ENCODE measurements at regions of chr7 and their contacts with region 1.

Region 1: DNA sequence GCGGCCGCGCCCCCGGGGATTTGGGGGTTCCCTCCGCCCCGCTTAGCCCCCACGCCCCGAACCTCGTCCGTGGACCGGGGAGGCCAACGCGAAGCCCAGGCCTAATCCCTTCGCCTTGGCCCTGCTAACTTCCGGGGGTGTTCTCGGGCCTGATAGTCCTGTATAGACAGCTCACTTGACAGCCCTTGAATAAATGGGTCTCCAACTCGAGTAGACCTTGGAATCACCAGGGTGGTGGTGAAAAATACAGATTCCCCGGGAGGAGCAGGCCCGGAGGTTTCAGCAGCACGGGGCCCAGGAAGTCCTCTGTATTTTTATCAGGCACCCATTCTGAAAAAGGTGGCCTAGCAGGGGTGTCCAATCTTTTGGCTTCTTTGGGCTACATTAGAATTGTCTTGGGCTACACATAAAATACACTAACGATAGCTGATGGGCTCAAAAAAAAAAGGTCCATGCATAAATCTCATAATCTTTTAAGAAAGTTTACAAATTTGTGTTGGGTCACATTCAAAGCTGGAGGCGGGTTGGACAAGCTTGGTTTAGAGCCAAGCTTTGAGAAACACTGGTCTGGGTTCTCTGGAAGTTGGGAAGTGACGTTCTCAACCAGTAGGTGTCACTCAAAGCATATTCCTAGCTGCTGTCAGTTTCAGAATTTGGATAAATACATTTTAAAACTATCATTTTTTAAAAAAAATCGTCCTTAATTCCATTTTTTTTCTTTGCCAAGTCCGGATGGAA is 221.7 kb downstream of the PHTF2 start:
- DNase-seq: peak; percentile 80
- H3K4me3 ChIP-seq: peak overlapping the region in 2 of 3 experiments; percentile 33 to 41
- H3K27ac ChIP-seq: peak overlapping the region; percentile 28
- H3K4me1 ChIP-seq: peaks cover 11% of the 10 kb centered on the region
- H3K27me3 ChIP-seq: peaks cover 9 to 15% of the 10 kb centered on the region in 2 experiments
- CTCF ChIP-seq: peak; percentile 57 to 65
- POLR2A ChIP-seq: no peak

Region 2: DNA sequence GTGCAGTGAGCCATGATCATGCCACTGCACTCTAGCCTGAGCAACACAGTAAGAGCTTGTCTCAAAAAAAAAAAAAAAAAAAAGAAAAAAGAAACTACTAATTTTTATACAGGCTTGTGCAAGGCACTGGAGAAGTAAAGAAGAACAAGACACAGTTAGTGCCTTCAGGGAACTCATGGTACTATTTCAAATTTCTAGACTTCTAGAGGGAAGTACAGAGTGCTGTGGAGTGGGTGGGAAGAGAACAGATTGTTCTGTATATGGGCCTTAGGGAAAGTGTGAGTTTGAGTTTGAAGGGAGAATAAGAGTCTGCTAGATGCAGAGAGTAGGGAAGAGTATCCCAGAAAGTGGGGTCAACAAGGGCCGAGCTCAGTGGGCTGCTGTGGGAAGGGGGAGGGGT is 13.1 kb after region 1 on chr7:
- CTCF ChIA-PET with region 1: interaction called, 112 read pairs
- POLR2A ChIA-PET with region 1: no interaction called
- dilution Hi-C with region 1: no loop called
- intact Hi-C with region 1: no loop called
- DNase-seq: no peak
- H3K4me3 ChIP-seq: no peak overlapping the region
- H3K27ac ChIP-seq: no peak overlapping the region
- H3K4me1 ChIP-seq: no peaks in the 10 kb centered on the region
- H3K27me3 ChIP-seq: peaks cover 4 to 17% of the 10 kb centered on the region in 2 experiments
- CTCF ChIP-seq: no peak
- POLR2A ChIP-seq: no peak

Region 3: DNA sequence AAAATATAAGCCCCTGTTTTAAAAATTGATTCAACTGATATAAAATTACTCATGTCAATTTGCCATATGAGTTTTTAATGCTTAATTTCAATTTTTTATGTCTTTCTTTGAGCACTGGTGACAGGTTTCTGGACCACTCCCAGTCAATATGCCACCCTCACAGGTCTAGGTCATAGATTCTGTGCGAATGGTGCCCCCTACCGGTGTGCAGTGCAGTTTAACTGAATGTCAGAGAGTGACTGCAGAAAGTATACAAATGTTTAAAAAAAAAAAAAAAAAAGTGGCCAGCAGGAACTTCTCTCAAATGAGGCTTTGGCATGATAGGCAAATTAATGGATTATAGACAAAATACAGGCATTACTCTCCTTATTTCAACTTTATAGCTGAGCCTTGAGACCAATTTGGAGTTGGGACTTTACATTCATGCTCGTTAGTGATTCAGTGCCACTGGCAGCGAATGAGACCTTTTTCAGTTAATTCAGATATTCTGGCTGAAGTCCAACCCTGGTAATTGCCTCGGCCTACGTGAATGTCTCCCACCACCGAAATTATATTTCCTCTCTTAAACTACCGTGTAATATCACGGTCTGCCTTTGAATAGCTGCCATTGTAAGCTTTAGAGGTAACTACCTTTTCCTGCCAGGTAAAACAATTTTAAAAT is 205.9 kb after region 1 on chr7:
- CTCF ChIA-PET with region 1: interaction called, 3 read pairs
- POLR2A ChIA-PET with region 1: no interaction called
- dilution Hi-C with region 1: no loop called
- intact Hi-C with region 1: loop called (anchors 2 kb)
- DNase-seq: peak; percentile 25
- H3K4me3 ChIP-seq: no peak overlapping the region
- H3K27ac ChIP-seq: no peak overlapping the region
- H3K4me1 ChIP-seq: no peaks in the 10 kb centered on the region
- H3K27me3 ChIP-seq: no peaks in the 10 kb centered on the region
- CTCF ChIP-seq: peak; percentile 23
- POLR2A ChIP-seq: no peak

Region 4: DNA sequence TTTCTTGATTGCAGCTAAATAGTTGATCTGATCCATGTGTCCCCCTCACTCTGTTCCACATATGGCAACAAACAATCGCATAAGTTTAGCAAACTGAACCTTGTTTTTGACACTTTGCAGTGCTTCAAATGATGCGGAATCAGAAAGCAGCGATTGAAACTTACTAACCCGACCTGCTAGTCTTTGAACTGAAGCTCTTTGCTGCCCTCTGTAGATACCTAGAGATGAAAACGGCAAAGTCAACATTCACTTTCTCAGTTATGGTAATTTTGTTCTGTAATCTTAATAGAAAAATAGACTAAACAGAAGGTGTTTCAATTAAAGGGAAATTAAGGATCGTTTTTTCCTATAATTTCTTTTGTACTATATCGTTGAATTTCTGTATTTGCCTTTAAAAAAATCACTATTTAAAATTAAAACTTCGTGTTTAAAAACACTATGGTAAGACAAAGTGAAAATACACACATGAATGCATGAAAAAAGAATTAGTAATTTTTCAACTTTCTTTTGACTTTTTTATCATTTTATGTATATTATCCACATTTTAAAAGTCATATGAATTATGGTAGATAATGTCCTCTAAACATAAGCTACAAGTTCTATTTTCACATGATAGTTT is 1156.7 kb after region 1 on chr7:
- CTCF ChIA-PET with region 1: interaction called, 14 read pairs
- POLR2A ChIA-PET with region 1: no interaction called
- dilution Hi-C with region 1: no loop called
- intact Hi-C with region 1: loop called (anchors 5 kb)
- DNase-seq: peak; percentile 53
- H3K4me3 ChIP-seq: no peak overlapping the region
- H3K27ac ChIP-seq: no peak overlapping the region
- H3K4me1 ChIP-seq: no peaks in the 10 kb centered on the region
- H3K27me3 ChIP-seq: no peaks in the 10 kb centered on the region
- CTCF ChIP-seq: peak; percentile 48 to 50
- POLR2A ChIP-seq: no peak